ENCODE measurements at regions of chr4 and their contacts with region 1.

Region 1: DNA sequence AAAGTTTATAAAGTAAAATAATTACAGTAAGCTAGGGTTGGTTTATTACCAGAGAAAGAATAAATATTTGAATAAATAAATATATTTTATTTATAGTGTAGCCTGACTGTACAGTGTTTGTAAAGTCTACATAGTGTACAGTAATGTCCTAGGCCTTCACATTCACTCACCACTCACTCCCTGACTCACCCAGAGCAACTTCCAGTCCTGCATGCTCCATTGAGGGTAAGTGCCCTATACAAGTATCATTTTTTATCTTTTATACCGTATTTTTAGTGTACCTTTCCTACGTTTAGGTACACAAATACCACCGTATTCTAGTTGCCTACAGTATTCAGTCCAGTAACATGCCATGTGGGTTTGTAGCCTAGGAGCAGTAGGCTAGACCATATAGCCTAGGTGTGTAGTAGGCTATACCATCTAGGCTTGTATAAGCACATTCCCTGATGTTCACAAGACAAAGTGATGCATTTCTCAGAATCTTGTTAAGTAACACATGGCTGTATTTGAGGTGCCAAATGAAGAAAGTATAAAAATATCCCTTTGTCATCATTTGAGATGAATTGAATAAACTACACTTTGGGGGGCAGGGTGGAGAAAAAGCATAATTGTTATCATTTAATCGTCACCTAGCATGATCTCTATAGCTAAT is 14.7 kb upstream of the KLHL8 start:
- DNase-seq: no peak
- H3K4me3 Mint-ChIP-seq: peak overlapping the region; percentile 61
- H3K27ac Mint-ChIP-seq: no peak overlapping the region
- H3K4me1 Mint-ChIP-seq: peaks cover 6% of the 10 kb centered on the region
- H3K27me3 Mint-ChIP-seq: peaks cover 25% of the 10 kb centered on the region

Region 2: DNA sequence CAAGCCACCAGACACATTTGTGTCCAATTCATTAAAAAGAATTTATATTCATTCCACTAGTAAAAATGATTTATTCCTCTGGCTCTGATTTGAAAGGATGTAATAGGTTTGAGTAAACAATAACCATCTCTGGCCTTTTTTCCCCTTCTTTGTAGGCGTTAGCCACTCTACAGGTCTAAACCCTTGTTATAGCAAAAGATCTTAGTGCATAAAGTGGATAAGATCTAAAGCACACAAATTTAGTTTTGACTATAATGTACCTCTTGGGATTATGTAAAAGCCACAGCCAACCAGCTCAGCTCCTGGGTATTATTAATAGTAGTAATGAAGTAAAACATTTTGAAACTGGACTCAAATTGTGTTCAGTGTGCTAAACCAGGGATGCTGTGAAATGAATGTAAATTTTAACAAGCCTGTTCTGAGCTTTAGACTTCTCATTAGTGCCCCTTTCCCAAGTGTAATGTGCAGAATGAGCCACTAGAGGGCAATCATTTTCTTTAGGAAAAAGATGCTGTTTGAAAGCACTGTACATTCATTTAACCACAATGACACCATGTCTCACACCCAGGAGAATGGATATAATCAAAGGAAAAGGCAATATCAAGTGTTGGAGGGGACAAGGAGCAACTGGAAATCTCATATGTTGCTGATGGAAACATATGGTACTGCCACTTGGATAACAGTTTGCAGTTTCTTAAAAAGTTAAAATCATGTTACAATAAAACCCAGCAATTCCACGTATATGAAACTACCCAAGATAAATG is 84.5 kb before region 1 on chr4:
- CTCF ChIA-PET with region 1: interaction called, 29 read pairs
- DNase-seq: peak; percentile 55
- H3K4me3 Mint-ChIP-seq: no peak overlapping the region
- H3K27ac Mint-ChIP-seq: no peak overlapping the region
- H3K4me1 Mint-ChIP-seq: no peaks in the 10 kb centered on the region
- H3K27me3 Mint-ChIP-seq: no peaks in the 10 kb centered on the region

Region 3: DNA sequence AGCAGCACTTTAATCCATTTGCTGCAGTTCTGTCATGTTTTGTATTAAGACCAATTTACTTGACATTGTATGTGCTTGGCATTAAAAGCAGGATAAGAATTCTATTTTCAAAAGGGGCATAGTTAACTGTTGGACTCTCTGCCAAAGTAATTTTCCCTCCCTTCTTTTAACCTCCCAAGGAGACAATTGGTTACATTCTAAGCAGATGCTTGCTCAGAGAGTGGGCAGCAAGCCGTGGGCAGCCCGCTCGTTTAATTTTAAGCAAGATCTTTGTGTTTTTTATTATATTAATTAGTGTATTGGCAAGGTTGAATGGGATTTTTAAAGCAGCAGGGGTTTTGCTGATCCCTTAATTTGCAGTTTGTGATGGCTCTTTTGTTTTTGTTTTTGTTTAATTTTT is 22.4 kb after region 1 on chr4:
- CTCF ChIA-PET with region 1: no interaction called
- DNase-seq: no peak
- H3K4me3 Mint-ChIP-seq: no peak overlapping the region
- H3K27ac Mint-ChIP-seq: no peak overlapping the region
- H3K4me1 Mint-ChIP-seq: no peaks in the 10 kb centered on the region
- H3K27me3 Mint-ChIP-seq: peaks cover 8% of the 10 kb centered on the region

Region 4: GRCh38 chr4:87697272-87697671 is 462.1 kb after region 1 on chr4:
- CTCF ChIA-PET with region 1: no interaction called
- DNase-seq: no peak
- H3K4me3 Mint-ChIP-seq: no peak overlapping the region
- H3K27ac Mint-ChIP-seq: no peak overlapping the region
- H3K4me1 Mint-ChIP-seq: no peaks in the 10 kb centered on the region
- H3K27me3 Mint-ChIP-seq: no peaks in the 10 kb centered on the region